ENCODE measurements at regions of chr14 and their contacts with region 1.

Region 1: DNA sequence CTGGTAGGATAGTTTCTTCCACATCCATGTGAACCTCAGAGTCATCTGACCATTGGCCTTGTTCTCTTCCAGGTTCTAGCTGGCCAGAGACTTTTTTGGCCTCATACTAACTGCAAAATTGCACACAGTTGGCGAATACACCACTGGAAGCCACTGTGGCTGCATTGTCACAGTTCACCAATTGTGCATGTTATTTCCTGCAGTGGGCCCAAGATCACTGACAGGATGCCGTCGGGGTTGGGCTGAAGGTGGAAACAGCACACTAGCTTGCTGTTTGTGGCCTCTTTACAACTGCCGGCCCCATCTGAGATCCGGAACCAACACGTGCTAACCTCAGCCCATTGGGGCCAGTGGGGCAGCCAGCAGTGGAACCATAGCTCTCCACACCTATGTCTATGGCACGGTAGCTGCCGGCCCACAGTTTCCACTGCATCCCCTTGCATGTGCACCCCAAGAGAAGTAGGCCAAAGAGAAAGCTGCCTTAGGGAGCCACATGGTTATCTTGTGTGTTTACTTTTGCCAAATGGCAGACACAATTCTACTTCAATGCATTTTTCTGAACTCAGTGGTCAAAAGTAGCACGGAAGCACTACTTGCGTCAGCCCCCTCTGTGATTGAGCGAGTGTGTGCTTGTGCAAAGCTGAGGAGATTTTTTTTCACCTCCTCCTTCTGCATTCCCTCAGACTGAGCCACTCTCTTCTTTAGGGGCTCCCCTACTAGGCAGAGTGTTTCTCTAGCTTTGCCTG is 464.0 kb downstream of the RAD51B start:
- DNase-seq: peak; percentile 61
- ATAC-seq: peak; percentile 60
- H3K4me3 Mint-ChIP-seq: peak overlapping the region; percentile 58
- H3K27ac Mint-ChIP-seq: peak overlapping the region; percentile 99
- H3K4me1 Mint-ChIP-seq: peaks cover 97% of the 10 kb centered on the region
- H3K27me3 Mint-ChIP-seq: no peaks in the 10 kb centered on the region
- CTCF ChIP-seq: no peak

Region 2: GRCh38 chr14:68232300-68233055 is 51.1 kb before region 1 on chr14:
- CTCF ChIA-PET with region 1: no interaction called
- POLR2A ChIA-PET with region 1: no interaction called
- intact Hi-C with region 1: no loop called
- DNase-seq: no peak
- ATAC-seq: peak; percentile 91
- H3K4me3 Mint-ChIP-seq: no peak overlapping the region
- H3K27ac Mint-ChIP-seq: no peak overlapping the region
- H3K4me1 Mint-ChIP-seq: peaks cover 2% of the 10 kb centered on the region
- H3K27me3 Mint-ChIP-seq: no peaks in the 10 kb centered on the region
- CTCF ChIP-seq: no peak

Region 3: DNA sequence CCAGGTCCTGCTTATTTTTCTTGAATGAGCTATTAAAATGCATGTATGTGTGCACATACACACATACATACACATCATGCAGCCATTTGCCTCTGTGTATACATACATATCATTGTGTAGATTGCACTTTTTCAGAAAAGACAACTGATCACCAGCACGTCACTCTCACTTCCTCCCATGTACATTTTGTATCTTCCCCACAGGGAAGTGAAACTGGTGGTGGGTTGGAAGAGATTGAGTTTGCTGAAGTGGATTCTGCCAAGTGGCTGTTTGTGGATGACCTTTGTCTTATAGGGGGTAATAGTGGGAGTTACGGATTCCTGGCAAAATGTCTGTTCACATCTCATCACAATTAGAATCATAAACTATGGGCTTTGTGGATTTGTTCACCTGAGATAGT is 15.4 kb before region 1 on chr14:
- CTCF ChIA-PET with region 1: interaction called, 22 read pairs
- POLR2A ChIA-PET with region 1: interaction called, 375 read pairs
- intact Hi-C with region 1: loop called (anchors 1 kb)
- DNase-seq: no peak
- ATAC-seq: peak; percentile 67
- H3K4me3 Mint-ChIP-seq: peak overlapping the region; percentile 63
- H3K27ac Mint-ChIP-seq: peak overlapping the region; percentile 93
- H3K4me1 Mint-ChIP-seq: peaks cover 93% of the 10 kb centered on the region
- H3K27me3 Mint-ChIP-seq: no peaks in the 10 kb centered on the region
- CTCF ChIP-seq: no peak

Region 4: GRCh38 chr14:68312884-68313610 is 29.5 kb after region 1 on chr14:
- CTCF ChIA-PET with region 1: interaction called, 15 read pairs
- POLR2A ChIA-PET with region 1: interaction called, 251 read pairs
- intact Hi-C with region 1: loop called (anchors 1 kb)
- DNase-seq: no peak
- ATAC-seq: peak; percentile 84
- H3K4me3 Mint-ChIP-seq: peak overlapping the region; percentile 62
- H3K27ac Mint-ChIP-seq: peak overlapping the region; percentile 94
- H3K4me1 Mint-ChIP-seq: peaks cover 91% of the 10 kb centered on the region
- H3K27me3 Mint-ChIP-seq: no peaks in the 10 kb centered on the region
- CTCF ChIP-seq: no peak

Region 5: DNA sequence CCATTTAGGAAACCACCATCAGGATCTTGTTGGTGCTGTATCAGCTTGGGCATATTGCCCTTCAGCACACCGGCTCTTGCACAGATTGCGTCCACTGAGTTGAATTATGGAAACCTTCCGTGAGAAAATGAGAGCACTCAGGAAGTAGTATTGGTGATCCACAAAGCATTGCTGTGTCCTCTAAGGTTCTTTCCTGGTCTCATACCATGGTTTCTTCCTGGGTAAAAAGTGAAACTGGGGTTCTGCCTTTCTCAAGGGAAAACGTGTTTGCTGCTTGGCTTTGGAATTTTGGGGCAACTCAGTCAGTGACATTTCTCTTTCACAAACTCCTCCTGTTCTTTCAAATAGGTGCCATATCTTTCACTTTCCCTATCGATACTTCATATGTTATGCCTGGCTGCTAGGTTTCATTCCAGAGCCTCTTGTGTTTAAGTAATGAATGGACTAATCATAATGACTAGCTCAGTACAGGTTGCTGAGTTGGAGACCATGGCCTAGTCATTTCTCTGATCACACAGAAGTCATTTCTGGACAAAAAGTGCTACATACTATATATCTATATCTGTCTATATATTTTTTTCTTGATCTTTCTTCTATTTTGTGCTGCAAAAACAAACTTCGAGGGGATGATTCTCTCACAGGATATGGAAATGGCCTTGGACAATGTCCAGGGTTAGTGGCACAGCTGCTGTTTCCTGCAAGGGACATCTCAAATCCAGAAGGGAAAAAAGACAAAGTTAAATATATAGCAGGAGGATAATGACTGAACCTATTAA is 85.9 kb after region 1 on chr14:
- CTCF ChIA-PET with region 1: interaction called, 5 read pairs
- POLR2A ChIA-PET with region 1: interaction called, 40 read pairs
- intact Hi-C with region 1: no loop called
- DNase-seq: no peak
- ATAC-seq: peak; percentile 23
- H3K4me3 Mint-ChIP-seq: peak overlapping the region; percentile 59
- H3K27ac Mint-ChIP-seq: peak overlapping the region; percentile 95
- H3K4me1 Mint-ChIP-seq: peaks cover 94% of the 10 kb centered on the region
- H3K27me3 Mint-ChIP-seq: no peaks in the 10 kb centered on the region
- CTCF ChIP-seq: no peak

Region 6: GRCh38 chr14:68408680-68409079 is 125.1 kb after region 1 on chr14:
- CTCF ChIA-PET with region 1: interaction called, 12 read pairs
- POLR2A ChIA-PET with region 1: interaction called, 340 read pairs
- intact Hi-C with region 1: loop called (anchors 1 kb)
- DNase-seq: no peak
- ATAC-seq: peak; percentile 53
- H3K4me3 Mint-ChIP-seq: peak overlapping the region; percentile 16
- H3K27ac Mint-ChIP-seq: peak overlapping the region; percentile 80
- H3K4me1 Mint-ChIP-seq: peaks cover 75% of the 10 kb centered on the region
- H3K27me3 Mint-ChIP-seq: no peaks in the 10 kb centered on the region
- CTCF ChIP-seq: no peak

Region 7: DNA sequence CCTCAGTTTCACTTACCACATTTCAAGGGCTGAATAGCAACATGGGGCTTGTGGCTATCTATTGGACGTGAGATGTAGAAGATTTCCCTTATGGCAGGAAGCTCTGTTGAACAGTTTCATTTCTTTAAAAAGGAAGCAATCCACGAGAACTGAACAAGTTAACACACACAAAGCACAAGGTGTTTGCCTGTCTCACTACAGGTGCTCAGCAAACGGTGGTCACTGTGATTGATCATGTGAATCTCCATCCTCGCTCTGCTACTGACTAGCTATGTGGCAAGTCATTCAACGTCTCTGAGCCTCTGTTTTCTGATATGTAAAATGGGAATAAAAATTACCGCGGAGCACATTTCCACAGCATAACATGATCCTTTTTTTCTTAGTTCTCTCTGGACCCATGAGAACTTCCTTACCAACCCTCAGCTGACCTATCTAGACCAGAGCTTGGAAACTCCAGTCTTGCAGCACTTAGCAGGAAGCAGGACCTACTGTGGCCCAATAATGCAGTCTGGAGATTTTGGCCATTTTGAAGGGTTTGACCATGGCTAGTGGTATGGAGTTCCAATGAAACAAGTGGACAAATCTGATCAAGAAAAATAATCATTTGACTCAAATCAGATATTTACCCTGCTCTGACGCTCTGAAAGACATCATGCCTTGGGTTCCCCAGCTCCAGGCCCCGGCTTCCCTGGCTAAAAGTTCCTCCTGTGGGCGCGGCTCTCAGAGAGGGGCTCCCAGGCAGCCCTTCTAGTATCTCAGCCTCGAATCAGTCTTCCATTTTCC is 230.5 kb after region 1 on chr14:
- CTCF ChIA-PET with region 1: no interaction called
- POLR2A ChIA-PET with region 1: interaction called, 38 read pairs
- intact Hi-C with region 1: no loop called
- DNase-seq: no peak
- ATAC-seq: peak; percentile 84
- H3K4me3 Mint-ChIP-seq: peak overlapping the region; percentile 64
- H3K27ac Mint-ChIP-seq: peak overlapping the region; percentile 94
- H3K4me1 Mint-ChIP-seq: peaks cover 66% of the 10 kb centered on the region
- H3K27me3 Mint-ChIP-seq: no peaks in the 10 kb centered on the region
- CTCF ChIP-seq: no peak

Region 8: GRCh38 chr14:68807148-68807600 is 523.6 kb after region 1 on chr14:
- CTCF ChIA-PET with region 1: no interaction called
- POLR2A ChIA-PET with region 1: interaction called, 186 read pairs
- intact Hi-C with region 1: no loop called
- DNase-seq: no peak
- ATAC-seq: no peak
- H3K4me3 Mint-ChIP-seq: peak overlapping the region; percentile 71
- H3K27ac Mint-ChIP-seq: peak overlapping the region; percentile 98
- H3K4me1 Mint-ChIP-seq: peaks cover 80% of the 10 kb centered on the region
- H3K27me3 Mint-ChIP-seq: no peaks in the 10 kb centered on the region
- CTCF ChIP-seq: no peak

Measured in activated B cell treated with CpG ODN at 0.5 μM for 24 hours (primary cell).